ENCODE measurements at regions of chr4 and their contacts with region 1.

Region 1: DNA sequence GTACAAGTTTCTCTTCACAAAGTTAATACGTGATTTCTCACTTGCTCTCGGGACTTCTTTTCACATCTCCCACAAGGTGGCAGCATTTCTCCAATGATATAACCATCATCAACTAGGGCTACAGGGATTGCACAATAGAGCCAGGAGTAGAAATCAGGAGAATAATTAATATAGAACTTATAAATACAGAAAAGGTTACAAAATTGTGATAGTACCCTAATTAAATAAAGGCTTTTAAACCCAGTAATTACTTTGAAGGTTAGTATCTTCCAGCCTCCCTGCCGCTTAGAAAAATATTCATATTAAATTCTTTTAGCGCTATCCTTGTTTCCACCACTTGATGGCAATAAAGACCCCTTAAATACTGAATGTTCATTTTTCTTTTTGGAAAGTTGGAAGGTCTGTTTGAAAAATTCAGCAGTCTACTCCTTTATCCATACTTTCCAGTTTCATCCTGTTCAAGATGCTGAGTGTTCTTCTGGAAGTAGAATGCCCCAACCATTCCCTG is 65.8 kb downstream of the RASGEF1B start:
- DNase-seq: no peak
- H3K4me3 ChIP-seq: peak overlapping the region in 2 of 8 donors; percentile 18 to 37
- H3K27ac ChIP-seq: no peak overlapping the region
- H3K4me1 ChIP-seq: peaks cover 0 to 10% (median 6%) of the 10 kb centered on the region in 6 donors
- H3K27me3 ChIP-seq: no peaks in the 10 kb centered on the region
- CTCF ChIP-seq: peak in 10 of 11 experiments; percentile 62 to 87 (median 78)
- POLR2A ChIP-seq: no peak

Region 2: DNA sequence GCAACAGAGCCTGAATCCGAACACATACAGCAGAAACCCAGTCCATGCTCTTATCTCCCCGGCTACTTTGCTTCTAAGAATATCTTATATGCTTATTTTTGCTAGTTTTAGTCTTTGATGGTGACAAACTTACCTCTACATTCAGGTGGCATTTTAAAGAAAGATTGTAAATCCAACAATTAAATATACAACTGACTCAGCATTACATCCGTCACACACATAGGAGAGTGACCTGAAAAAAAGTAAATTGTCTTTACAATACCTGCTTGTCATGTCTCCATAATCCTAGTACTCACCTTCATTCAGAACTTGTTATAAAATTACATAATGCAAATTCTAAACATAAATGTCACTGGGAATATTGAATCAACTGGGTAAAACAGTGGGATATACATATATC is 406.0 kb before region 1 on chr4:
- intact Hi-C with region 1: no loop called
- DNase-seq: no peak
- H3K4me3 ChIP-seq: no peak overlapping the region
- H3K27ac ChIP-seq: no peak overlapping the region
- H3K4me1 ChIP-seq: peaks cover 0 to 4% (median 0%) of the 10 kb centered on the region in 6 donors
- H3K27me3 ChIP-seq: no peaks in the 10 kb centered on the region
- CTCF ChIP-seq: no peak
- POLR2A ChIP-seq: no peak

Region 3: GRCh38 chr4:81227968-81228367 is 178.0 kb before region 1 on chr4:
- intact Hi-C with region 1: no loop called
- DNase-seq: no peak
- H3K4me3 ChIP-seq: no peak overlapping the region
- H3K27ac ChIP-seq: no peak overlapping the region
- H3K4me1 ChIP-seq: no peaks in the 10 kb centered on the region
- H3K27me3 ChIP-seq: no peaks in the 10 kb centered on the region
- CTCF ChIP-seq: no peak
- POLR2A ChIP-seq: no peak

Region 4: GRCh38 chr4:81466841-81467671 is 61.1 kb after region 1 on chr4:
- intact Hi-C with region 1: loop called (anchors 10 kb)
- DNase-seq: no peak
- H3K4me3 ChIP-seq: peak overlapping the region in 1 of 8 donors; percentile 38
- H3K27ac ChIP-seq: peak overlapping the region in 1 of 8 donors; percentile 9
- H3K4me1 ChIP-seq: peaks cover 0 to 91% (median 60%) of the 10 kb centered on the region in 6 donors
- H3K27me3 ChIP-seq: no peaks in the 10 kb centered on the region
- CTCF ChIP-seq: peak; percentile 76 to 95 (median 87)
- POLR2A ChIP-seq: no peak

Region 5: DNA sequence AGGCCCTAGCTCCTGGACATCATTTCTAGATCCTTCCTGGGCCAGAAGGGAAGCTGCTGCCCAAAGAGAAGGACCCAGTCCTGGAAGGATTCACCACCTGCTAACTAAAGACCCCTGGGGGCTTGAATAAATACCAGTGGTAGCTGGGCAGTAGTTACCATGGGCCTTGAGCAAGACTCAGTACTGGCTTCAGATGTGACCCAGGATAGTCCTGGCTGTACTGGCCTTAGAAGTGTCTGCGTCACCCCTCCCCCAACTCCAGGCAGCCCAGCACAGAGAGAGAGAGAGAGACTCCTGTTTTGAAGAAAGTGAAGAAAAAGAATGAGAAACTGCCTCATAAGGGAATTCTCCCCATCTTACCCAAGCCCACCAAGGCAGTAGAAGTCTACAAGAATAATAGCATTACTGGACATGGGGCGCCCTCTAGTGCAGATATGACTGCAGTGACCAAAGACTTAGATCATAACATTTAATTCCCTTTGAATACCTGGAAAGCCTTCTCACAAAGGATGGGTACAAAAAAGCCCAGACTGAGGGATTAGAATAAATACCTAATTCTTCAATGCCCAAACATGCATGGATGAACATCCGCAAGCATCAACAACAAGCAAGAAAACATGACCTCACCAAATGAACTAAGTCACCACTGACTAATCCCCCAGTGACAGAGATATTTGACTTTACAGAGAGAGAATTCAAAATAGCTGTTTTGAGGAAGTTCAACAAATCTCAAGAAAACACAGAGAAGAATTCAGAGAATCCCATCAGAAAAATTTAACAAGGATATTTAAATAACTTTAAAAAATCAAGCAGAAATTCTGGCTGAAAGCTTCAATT is 796.1 kb after region 1 on chr4:
- intact Hi-C with region 1: loop called (anchors 5 kb)
- DNase-seq: no peak
- H3K4me3 ChIP-seq: no peak overlapping the region
- H3K27ac ChIP-seq: no peak overlapping the region
- H3K4me1 ChIP-seq: no peaks in the 10 kb centered on the region
- H3K27me3 ChIP-seq: no peaks in the 10 kb centered on the region
- CTCF ChIP-seq: peak in 10 of 11 experiments; percentile 41 to 64 (median 59)
- POLR2A ChIP-seq: no peak

Region 6: GRCh38 chr4:82268050-82268825 is 862.3 kb after region 1 on chr4:
- intact Hi-C with region 1: loop called (anchors 5 kb)
- DNase-seq: no peak
- H3K4me3 ChIP-seq: no peak overlapping the region
- H3K27ac ChIP-seq: peak overlapping the region in 3 of 8 donors; percentile 19 to 30 (median 21)
- H3K4me1 ChIP-seq: peaks cover 0 to 34% (median 12%) of the 10 kb centered on the region in 6 donors
- H3K27me3 ChIP-seq: no peaks in the 10 kb centered on the region
- CTCF ChIP-seq: peak in 10 of 11 experiments; percentile 40 to 76 (median 68)
- POLR2A ChIP-seq: no peak